Activated CD4-positive, alpha-beta T cell treated with anti-CD3 and anti-CD28 coated beads for 36 hours (primary cell): ENCODE measurements at regions of chr2 and their contacts with region 1.

Region 1: GRCh38 chr2:176079831-176080539 is 3.8 kb downstream of the EVX2 start:
- DNase-seq: peak; percentile 63
- ATAC-seq: peak; percentile 47
- H3K4me3 Mint-ChIP-seq: peak overlapping the region; percentile 46
- H3K27ac Mint-ChIP-seq: no peak overlapping the region
- H3K4me1 Mint-ChIP-seq: peaks cover 13% of the 10 kb centered on the region
- H3K27me3 Mint-ChIP-seq: peaks cover 70% of the 10 kb centered on the region

Region 2: GRCh38 chr2:174334781-174335251 is 1745.2 kb before region 1 on chr2 and contains the start of gene SP9:
- CTCF ChIA-PET with region 1: no interaction called
- POLR2A ChIA-PET with region 1: no interaction called
- intact Hi-C with region 1: loop called (anchors 5 to 10 kb)
- DNase-seq: peak; percentile 62
- ATAC-seq: peak; percentile 39
- H3K4me3 Mint-ChIP-seq: peak within 1 kb of the TSS; percentile 59
- H3K27ac Mint-ChIP-seq: peak within 1 kb of the TSS; percentile 47
- H3K4me1 Mint-ChIP-seq: peaks cover 28% of the 10 kb centered on the region
- H3K27me3 Mint-ChIP-seq: peaks cover 69% of the 10 kb centered on the region
- total RNA-seq, gene SP9: not detected

Region 3: DNA sequence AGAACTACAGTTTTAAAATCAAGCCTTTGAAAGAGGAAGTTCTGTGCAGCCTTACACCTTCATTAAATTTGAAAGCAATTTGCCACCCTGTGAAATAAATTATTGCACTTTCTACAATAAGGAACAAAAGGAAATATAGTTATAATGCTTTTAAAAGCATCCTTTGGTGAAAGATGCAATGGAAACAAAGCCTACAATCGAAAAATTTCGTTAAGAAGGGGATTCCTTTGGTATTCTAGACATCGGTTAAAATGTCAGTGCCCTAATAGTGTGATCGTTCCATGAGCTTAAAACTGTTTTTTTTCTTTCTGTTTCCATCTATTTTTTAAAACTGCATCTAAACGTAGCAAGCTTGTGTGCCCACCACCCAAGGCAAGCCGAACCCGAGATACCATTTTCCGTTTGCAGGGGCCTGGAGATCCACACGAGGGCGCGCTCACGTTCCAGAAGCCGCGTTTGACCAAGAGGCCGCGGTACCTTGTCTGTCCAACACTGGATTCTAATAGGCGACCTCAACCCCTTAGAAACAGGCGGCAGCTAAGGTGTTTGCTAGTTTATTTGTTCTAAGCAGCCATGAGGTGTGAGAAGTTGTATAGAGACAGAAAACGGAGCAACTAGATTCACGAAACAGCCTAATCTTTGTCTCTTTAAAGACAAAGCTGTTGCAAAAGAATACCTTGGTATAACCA is 31.1 kb after region 1 on chr2:
- CTCF ChIA-PET with region 1: interaction called, 6 read pairs
- POLR2A ChIA-PET with region 1: no interaction called
- intact Hi-C with region 1: loop called (anchors 2 to 5 kb)
- DNase-seq: peak; percentile 60
- ATAC-seq: no peak
- H3K4me3 Mint-ChIP-seq: no peak overlapping the region
- H3K27ac Mint-ChIP-seq: no peak overlapping the region
- H3K4me1 Mint-ChIP-seq: peaks cover 13% of the 10 kb centered on the region
- H3K27me3 Mint-ChIP-seq: peaks cover 70% of the 10 kb centered on the region

Region 4: GRCh38 chr2:176157499-176158185 is 77.7 kb after region 1 on chr2:
- CTCF ChIA-PET with region 1: no interaction called
- POLR2A ChIA-PET with region 1: no interaction called
- intact Hi-C with region 1: loop called in 1 of 2 experiments (anchors 2 kb)
- DNase-seq: peak; percentile 39
- ATAC-seq: no peak
- H3K4me3 Mint-ChIP-seq: peak overlapping the region; percentile 32
- H3K27ac Mint-ChIP-seq: no peak overlapping the region
- H3K4me1 Mint-ChIP-seq: peaks cover 13% of the 10 kb centered on the region
- H3K27me3 Mint-ChIP-seq: peaks cover 67% of the 10 kb centered on the region

Region 5: GRCh38 chr2:176206682-176207081 is 126.7 kb after region 1 on chr2:
- CTCF ChIA-PET with region 1: no interaction called
- POLR2A ChIA-PET with region 1: no interaction called
- intact Hi-C with region 1: no loop called
- DNase-seq: no peak
- ATAC-seq: no peak
- H3K4me3 Mint-ChIP-seq: no peak overlapping the region
- H3K27ac Mint-ChIP-seq: no peak overlapping the region
- H3K4me1 Mint-ChIP-seq: no peaks in the 10 kb centered on the region
- H3K27me3 Mint-ChIP-seq: peaks cover 28% of the 10 kb centered on the region

Region 6: DNA sequence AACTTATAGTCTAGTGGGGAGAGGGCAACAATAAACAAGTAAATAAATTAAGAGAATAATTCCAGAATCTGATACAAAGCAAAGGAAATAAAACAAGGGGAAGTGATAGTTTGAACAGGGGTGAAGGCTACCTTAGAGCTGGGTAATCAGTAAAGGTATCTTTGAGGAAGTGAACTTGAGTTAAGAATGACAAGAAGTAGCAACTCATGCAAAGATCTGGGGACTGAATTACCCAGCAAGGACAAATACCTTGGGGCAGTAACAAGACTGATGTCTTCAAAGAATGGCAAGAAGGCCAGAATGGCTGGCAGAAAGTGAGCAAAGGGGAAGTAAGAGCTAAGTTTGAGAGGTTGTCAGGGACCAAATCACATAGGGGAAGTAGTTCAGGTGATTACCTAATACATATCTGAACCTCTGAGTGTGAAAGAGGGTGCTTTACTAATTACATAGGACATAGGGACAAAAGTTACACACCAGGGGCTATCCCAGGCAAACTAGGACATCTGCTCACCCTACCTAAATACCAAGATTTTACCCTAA is 888.0 kb after region 1 on chr2:
- CTCF ChIA-PET with region 1: no interaction called
- POLR2A ChIA-PET with region 1: no interaction called
- intact Hi-C with region 1: no loop called
- DNase-seq: no peak
- ATAC-seq: no peak
- H3K4me3 Mint-ChIP-seq: no peak overlapping the region
- H3K27ac Mint-ChIP-seq: no peak overlapping the region
- H3K4me1 Mint-ChIP-seq: no peaks in the 10 kb centered on the region
- H3K27me3 Mint-ChIP-seq: peaks cover 5% of the 10 kb centered on the region